ENCODE measurements at regions of chr13 and their contacts with region 1.

Region 1: DNA sequence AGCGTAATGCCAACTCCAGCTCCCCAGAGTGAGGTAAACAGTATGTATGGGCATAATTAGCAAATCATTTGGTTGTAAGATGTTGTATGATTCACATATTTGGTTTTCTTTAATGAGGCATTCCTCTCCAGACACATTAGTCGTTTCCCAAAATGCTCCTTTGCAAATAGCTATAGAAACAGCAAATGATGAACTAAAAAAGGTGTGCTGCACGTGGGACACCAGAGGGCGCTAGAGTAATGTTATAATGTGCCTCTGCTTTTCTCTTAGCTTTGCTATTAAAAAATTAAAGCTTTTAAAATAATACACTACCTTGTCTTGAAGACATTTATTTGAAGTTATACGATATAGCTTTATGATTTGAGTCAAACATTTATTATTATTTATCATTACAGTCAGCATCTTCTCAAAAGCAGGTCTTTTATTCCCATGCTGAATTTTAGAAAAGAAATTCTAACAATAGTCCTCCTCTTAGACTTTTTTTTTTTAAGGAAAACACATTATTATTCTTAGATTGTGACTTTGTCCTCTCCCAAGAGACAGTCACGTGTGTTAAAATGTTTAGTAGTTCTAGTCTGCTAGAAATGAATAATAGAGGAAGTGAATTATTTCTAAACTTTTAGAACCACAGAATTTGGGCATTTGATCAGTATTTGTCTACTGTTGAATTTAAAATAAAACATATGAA is 121.6 kb upstream of the FRY start:
- DNase-seq: peak; percentile 31 to 76 (median 49)
- H3K4me3 ChIP-seq: no peak overlapping the region
- H3K27ac ChIP-seq: no peak overlapping the region
- H3K4me1 ChIP-seq: peaks cover 0 to 6% of the 10 kb centered on the region in 2 donors
- H3K27me3 ChIP-seq: no peaks in the 10 kb centered on the region
- CTCF ChIP-seq: peak; percentile 71 to 93 (median 80)
- POLR2A ChIP-seq: no peak

Region 2: GRCh38 chr13:31074756-31075155 is 835.3 kb before region 1 on chr13:
- intact Hi-C with region 1: no loop called
- DNase-seq: no peak
- H3K4me3 ChIP-seq: no peak overlapping the region
- H3K27ac ChIP-seq: no peak overlapping the region
- H3K4me1 ChIP-seq: no peaks in the 10 kb centered on the region
- H3K27me3 ChIP-seq: no peaks in the 10 kb centered on the region
- CTCF ChIP-seq: no peak
- POLR2A ChIP-seq: no peak

Region 3: DNA sequence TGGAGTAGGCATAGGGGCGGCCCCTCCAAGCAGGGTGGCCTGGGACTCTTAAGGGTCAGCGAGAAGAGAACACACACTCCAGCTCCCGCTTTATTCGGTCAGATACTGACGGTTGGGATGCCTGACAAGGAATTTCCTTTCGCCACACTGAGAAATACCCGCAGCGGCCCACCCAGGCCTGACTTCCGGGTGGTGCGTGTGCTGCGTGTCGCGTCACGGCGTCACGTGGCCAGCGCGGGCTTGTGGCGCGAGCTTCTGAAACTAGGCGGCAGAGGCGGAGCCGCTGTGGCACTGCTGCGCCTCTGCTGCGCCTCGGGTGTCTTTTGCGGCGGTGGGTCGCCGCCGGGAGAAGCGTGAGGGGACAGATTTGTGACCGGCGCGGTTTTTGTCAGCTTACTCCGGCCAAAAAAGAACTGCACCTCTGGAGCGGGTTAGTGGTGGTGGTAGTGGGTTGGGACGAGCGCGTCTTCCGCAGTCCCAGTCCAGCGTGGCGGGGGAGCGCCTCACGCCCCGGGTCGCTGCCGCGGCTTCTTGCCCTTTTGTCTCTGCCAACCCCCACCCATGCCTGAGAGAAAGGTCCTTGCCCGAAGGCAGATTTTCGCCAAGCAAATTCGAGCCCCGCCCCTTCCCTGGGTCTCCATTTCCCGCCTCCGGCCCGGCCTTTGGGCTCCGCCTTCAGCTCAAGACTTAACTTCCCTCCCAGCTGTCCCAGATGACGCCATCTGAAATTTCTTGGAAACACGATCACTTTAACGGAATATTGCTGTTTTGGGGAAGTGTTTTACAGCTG is 405.4 kb after region 1 on chr13 and contains the starts of genes BRCA2 and ZAR1L:
- intact Hi-C with region 1: loop called in 1 of 2 experiments (anchors 10 kb)
- DNase-seq: peak; percentile 86 to 92 (median 91)
- H3K4me3 ChIP-seq: peak within 1 kb of the TSS in 3 of 4 donors; percentile 26 to 76 (median 66)
- H3K27ac ChIP-seq: peak within 1 kb of the TSS; percentile 36 to 95 (median 90)
- H3K4me1 ChIP-seq: no peaks in the 10 kb centered on the region
- H3K27me3 ChIP-seq: no peaks in the 10 kb centered on the region
- CTCF ChIP-seq: no peak
- POLR2A ChIP-seq: peak; percentile 24 to 76
- total RNA-seq, gene BRCA2: 0.41 to 4.5 (median 1.3) TPM
- total RNA-seq, gene ZAR1L: not detected